Endothelial cell of umbilical vein (primary cell): ENCODE measurements at regions of chr4 and their contacts with region 1.

Region 1: DNA sequence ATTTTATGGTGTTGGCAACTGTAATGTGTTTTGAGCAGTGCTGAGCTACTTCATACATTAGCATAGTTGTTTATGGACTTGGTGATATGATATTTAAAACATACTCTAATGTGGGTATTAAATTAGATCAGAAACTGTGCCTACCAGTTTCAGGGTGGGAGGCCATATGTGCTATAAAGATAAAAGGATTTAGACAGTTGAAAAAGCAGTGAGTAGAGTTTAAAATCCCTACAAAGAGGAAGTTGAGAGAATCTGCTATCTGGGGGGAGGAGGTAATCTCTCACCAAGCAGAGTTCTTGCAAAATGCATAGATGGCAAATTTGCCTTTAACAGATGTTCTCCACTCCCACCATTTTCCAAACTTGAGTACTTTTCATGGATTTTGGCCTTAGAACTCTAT is 154.5 kb downstream of the SPOCK3 start:
- DNase-seq: no peak
- H3K4me3 ChIP-seq: no peak overlapping the region
- H3K27ac ChIP-seq: no peak overlapping the region
- H3K4me1 ChIP-seq: no peaks in the 10 kb centered on the region
- H3K27me3 ChIP-seq: no peaks in the 10 kb centered on the region
- CTCF ChIP-seq: no peak
- POLR2A ChIP-seq: no peak

Region 2: DNA sequence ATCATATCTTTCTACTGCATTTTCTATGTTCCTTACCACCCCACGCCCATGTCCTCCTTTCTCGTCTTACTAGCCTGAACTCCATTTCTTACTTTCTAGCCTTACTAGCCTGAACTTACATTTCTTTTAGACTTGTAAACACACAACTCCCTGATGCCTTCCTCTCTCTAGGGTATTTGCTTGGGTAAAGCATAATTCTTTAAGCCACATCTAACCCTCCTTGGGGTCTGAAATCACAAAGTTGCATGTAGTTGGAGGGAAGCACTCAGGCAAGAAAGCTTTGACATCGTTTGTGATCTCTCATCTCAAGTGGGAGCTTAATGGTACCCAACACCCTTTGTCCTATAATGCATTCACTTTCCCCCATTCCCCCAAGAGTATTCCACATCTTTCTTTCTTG is 30.1 kb after region 1 on chr4:
- CTCF ChIA-PET with region 1: no interaction called
- POLR2A ChIA-PET with region 1: no interaction called
- dilution Hi-C with region 1: no loop called
- intact Hi-C with region 1: loop called (anchors 5 kb)
- DNase-seq: no peak
- H3K4me3 ChIP-seq: no peak overlapping the region
- H3K27ac ChIP-seq: no peak overlapping the region
- H3K4me1 ChIP-seq: no peaks in the 10 kb centered on the region
- H3K27me3 ChIP-seq: no peaks in the 10 kb centered on the region
- CTCF ChIP-seq: no peak
- POLR2A ChIP-seq: no peak